CD4-positive, alpha-beta T cell (primary cell): ENCODE measurements at regions of chr5 and their contacts with region 1.

Region 1: GRCh38 chr5:134365604-134366003 is 1.4 kb downstream of the CDKL3 start:
- DNase-seq: no peak
- ATAC-seq: no peak
- H3K4me3 ChIP-seq: no peak overlapping the region
- H3K4me3 Mint-ChIP-seq: peak overlapping the region; percentile 14
- H3K27ac ChIP-seq: no peak overlapping the region
- H3K27ac Mint-ChIP-seq: no peak overlapping the region
- H3K4me1 ChIP-seq: peaks cover 22% of the 10 kb centered on the region
- H3K4me1 Mint-ChIP-seq: peaks cover 26% of the 10 kb centered on the region
- H3K27me3 ChIP-seq: no peaks in the 10 kb centered on the region
- H3K27me3 Mint-ChIP-seq: no peaks in the 10 kb centered on the region
- CTCF ChIP-seq: no peak

Region 2: DNA sequence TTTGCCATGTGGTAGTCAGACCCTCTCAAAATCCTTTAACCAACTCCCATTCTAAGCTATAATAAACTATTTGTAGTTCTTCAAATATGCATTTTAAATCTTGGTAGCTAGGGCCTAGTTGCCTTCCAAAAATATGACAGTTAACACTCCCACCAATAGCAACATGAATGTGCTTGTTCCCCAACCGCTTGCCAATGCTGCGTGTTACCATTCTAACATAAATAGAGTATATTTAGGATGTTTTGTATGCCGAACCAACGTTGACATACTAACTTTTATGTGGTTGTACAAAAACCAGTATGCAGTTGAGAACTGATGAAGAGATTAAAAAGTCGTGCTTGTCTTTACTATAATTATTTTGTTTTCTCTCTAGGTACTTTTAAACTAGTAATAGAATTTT is 14.7 kb after region 1 on chr5:
- CTCF ChIA-PET with region 1: interaction called, 4 read pairs
- POLR2A ChIA-PET with region 1: interaction called, 3 read pairs
- intact Hi-C with region 1: loop called in 1 of 2 experiments (anchors 2 kb)
- DNase-seq: peak in 2 of 14 experiments; percentile 26 to 39
- ATAC-seq: peak; percentile 67
- H3K4me3 ChIP-seq: no peak overlapping the region
- H3K4me3 Mint-ChIP-seq: peak overlapping the region; percentile 49
- H3K27ac ChIP-seq: no peak overlapping the region
- H3K27ac Mint-ChIP-seq: peak overlapping the region; percentile 70
- H3K4me1 ChIP-seq: peaks cover 9% of the 10 kb centered on the region
- H3K4me1 Mint-ChIP-seq: peaks cover 58% of the 10 kb centered on the region
- H3K27me3 ChIP-seq: no peaks in the 10 kb centered on the region
- H3K27me3 Mint-ChIP-seq: no peaks in the 10 kb centered on the region
- CTCF ChIP-seq: no peak

Region 3: DNA sequence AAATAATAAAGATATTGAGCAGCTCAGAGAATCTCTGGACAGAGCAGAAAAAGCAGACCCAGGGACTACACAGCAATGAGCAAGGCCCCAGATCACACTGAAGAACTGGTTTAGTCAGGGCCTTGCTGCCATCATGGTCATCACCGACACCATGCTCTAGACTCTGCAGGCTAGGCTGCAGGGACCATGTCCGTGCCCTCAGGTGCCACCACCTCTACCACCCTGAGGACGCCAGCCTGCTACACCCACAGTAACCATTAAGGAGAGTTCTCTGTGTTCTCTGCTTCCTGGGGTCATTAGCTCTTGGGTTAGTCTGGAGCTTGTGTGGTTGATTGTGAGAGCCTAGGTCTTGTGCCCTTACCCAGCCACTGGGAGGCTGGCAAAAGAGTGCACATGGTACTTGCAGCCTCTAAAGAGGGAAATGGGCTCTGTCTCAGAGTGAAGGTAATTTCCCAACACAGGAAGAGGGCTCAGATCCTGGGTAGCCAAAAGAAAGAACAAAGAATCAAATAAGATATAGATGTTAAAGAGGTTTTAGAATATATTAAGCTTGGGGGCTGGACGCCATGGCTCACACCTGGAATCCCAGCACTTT is 128.0 kb after region 1 on chr5:
- CTCF ChIA-PET with region 1: no interaction called
- POLR2A ChIA-PET with region 1: no interaction called
- intact Hi-C with region 1: no loop called
- DNase-seq: no peak
- ATAC-seq: no peak
- H3K4me3 ChIP-seq: no peak overlapping the region
- H3K4me3 Mint-ChIP-seq: no peak overlapping the region
- H3K27ac ChIP-seq: no peak overlapping the region
- H3K27ac Mint-ChIP-seq: no peak overlapping the region
- H3K4me1 ChIP-seq: no peaks in the 10 kb centered on the region
- H3K4me1 Mint-ChIP-seq: no peaks in the 10 kb centered on the region
- H3K27me3 ChIP-seq: no peaks in the 10 kb centered on the region
- H3K27me3 Mint-ChIP-seq: no peaks in the 10 kb centered on the region
- CTCF ChIP-seq: no peak

Region 4: DNA sequence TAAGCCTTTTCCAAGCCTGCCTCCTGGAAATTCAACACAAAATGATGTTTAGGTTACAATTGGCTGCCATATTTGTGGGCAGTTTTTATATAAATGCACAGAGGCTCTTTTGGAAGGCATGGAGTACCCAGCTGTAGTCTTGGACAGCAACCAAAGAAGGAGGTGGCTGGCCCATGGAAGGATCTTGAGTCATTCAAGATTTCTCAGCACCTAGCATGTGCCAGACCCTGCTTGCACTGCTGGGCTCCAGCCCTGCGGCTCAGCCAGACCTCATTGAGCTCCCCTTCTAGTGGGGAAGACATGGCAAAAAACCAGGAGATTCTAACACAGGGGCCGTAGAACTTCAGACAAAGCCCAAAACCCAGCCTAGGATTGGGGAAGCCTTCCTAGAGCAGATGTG is 182.0 kb after region 1 on chr5:
- CTCF ChIA-PET with region 1: no interaction called
- POLR2A ChIA-PET with region 1: no interaction called
- intact Hi-C with region 1: no loop called
- DNase-seq: no peak
- ATAC-seq: no peak
- H3K4me3 ChIP-seq: no peak overlapping the region
- H3K4me3 Mint-ChIP-seq: no peak overlapping the region
- H3K27ac ChIP-seq: no peak overlapping the region
- H3K27ac Mint-ChIP-seq: peak overlapping the region; percentile 90
- H3K4me1 ChIP-seq: peaks cover 69% of the 10 kb centered on the region
- H3K4me1 Mint-ChIP-seq: peaks cover 69% of the 10 kb centered on the region
- H3K27me3 ChIP-seq: no peaks in the 10 kb centered on the region
- H3K27me3 Mint-ChIP-seq: no peaks in the 10 kb centered on the region
- CTCF ChIP-seq: no peak

Region 5: GRCh38 chr5:134637161-134637582 is 271.6 kb after region 1 on chr5:
- CTCF ChIA-PET with region 1: no interaction called
- POLR2A ChIA-PET with region 1: no interaction called
- intact Hi-C with region 1: loop called in 1 of 2 experiments (anchors 2 kb)
- DNase-seq: no peak
- ATAC-seq: no peak
- H3K4me3 ChIP-seq: no peak overlapping the region
- H3K4me3 Mint-ChIP-seq: no peak overlapping the region
- H3K27ac ChIP-seq: no peak overlapping the region
- H3K27ac Mint-ChIP-seq: no peak overlapping the region
- H3K4me1 ChIP-seq: peaks cover 8% of the 10 kb centered on the region
- H3K4me1 Mint-ChIP-seq: peaks cover 12% of the 10 kb centered on the region
- H3K27me3 ChIP-seq: no peaks in the 10 kb centered on the region
- H3K27me3 Mint-ChIP-seq: no peaks in the 10 kb centered on the region
- CTCF ChIP-seq: no peak